ENCODE measurements at regions of chr12 and their contacts with region 1.

Region 1: DNA sequence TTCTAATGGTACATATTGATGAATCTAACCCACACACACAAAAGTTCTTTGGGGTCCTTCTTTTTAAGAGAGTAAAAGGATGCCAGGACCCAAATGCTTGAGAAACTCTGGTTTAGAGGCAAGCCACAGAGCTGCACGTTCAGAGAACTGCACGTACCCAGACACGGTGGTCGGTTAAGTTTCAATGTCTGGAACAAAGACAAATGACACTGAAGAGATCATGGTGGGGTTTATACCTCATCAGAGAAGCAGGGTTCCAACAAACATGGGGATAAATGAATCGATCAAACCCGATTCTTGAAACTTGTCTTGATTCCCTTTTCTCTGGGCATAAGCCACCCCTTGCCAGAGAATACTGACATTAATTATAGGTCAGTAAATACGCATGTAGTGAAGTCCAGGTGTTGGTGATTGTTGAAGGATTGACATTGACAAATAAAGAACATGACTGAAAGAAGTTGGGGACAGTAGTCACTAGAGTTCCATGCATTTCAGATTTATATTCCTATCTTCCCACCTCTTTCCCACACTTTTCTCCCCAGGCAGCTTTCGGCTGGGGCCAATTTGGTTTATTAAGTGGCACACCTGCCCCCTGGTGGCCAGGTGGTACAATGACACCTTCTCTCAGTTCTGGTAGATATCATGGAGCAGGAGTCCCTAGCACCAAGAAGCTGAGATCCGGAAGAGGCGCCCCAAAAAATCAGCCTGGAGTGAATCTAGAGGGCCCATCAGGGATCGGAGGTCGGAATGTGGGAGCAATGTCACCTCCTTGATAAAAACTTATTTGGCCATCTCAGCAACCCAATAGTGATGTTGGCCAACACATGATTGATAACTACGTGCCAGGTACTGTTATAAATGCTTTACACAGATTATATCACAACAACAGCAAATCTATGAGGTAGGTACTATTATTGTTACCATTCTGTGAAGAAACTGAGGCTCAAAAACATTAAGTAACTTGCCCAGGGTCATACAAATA is 17.8 kb upstream of the HDAC7 start:
- DNase-seq: peak; percentile 87
- H3K4me3 ChIP-seq: no peak overlapping the region
- H3K27ac ChIP-seq: peak overlapping the region in 4 of 8 donors; percentile 0 to 71 (median 24)
- H3K4me1 ChIP-seq: peaks cover 16 to 64% (median 51%) of the 10 kb centered on the region in 6 donors
- H3K27me3 ChIP-seq: no peaks in the 10 kb centered on the region
- CTCF ChIP-seq: peak; percentile 87 to 96 (median 93)
- POLR2A ChIP-seq: no peak

Region 2: DNA sequence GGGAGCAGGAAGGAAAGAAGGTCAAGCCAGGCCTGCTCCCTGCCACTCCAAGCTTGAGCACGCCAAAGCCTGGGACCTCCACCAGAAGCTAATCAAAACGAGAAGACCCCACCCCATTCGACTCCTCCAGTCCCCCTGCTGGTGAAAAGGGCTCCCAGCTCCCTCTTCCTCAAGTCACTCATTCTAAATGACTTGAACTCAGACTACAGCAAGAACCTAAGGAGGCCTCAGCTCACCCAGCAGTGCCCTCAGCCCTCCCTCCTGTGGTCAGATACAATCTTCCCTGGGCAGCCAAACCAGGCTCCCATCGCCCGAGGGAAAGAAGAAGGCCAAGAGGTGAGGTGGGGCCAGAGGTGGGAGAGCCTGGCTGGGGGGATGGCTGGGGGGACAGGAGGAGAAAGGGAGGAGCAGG is 35.2 kb before region 1 on chr12:
- intact Hi-C with region 1: loop called (anchors 5 kb)
- DNase-seq: no peak
- H3K4me3 ChIP-seq: peak overlapping the region in 1 of 8 donors; percentile 37
- H3K27ac ChIP-seq: peak overlapping the region; percentile 55 to 98 (median 80)
- H3K4me1 ChIP-seq: peaks cover 72 to 96% (median 86%) of the 10 kb centered on the region in 6 donors
- H3K27me3 ChIP-seq: no peaks in the 10 kb centered on the region
- CTCF ChIP-seq: peak in 5 of 11 experiments; percentile 11 to 47 (median 37)
- POLR2A ChIP-seq: no peak